Vagina (tissue), 2 donors: ENCODE measurements at regions of chr4 and their contacts with region 1.

Region 1: DNA sequence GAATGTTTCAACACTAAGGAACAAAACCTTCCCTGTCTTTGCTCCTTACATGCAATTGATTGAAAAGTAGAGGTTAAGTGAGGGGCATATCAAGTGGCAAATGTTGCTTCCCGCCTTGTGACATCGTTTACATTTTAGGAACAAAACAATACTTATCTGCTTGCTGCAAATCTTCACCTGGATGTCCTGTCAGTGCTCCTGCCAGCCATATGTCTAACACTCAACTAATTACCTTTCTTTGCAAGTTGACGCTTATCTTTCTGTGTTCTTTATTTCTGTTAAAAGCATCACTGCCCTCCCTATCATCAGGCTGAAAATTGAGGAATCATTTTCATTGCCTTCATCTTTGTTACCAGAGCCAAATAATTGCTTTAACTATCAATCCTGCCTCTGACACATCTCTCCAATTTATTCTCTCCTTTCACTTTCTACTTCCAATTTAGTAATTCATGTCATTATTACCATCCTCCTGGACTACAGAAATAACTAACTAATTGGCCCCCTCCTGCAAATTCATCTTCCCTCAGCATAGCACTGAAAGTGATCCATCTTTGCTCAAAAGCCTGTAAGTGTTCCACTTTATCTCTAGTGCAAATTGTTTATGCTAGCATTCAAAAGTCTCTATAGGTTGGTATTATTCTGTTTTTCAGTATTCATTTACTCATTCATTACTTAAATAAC is 298.7 kb upstream of the ATOH1 start:
- DNase-seq: no peak
- H3K4me3 ChIP-seq: no peak overlapping the region
- H3K27ac ChIP-seq: no peak overlapping the region
- H3K4me1 ChIP-seq: no peaks in the 10 kb centered on the region
- H3K27me3 ChIP-seq: no peaks in the 10 kb centered on the region
- CTCF ChIP-seq: no peak
- POLR2A ChIP-seq: no peak

Region 2: DNA sequence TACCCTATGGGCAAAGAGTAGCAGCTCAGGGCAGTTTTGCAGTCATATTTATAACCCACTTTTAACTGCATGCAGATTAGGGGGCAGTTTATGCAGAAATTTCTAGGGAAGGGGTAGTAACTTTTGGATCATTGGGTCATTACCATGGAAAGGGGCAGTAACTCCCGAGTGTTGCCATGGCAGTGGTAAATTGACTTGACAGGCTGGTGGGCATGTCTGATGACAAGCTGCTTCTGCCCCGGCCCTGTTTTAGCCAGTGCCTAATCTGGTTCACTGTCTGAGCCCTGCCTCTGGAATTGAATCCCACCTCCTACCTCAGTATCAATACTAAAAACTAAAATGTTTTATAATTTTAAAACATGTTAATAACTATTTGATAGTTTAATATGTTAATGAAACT is 63.4 kb before region 1 on chr4:
- intact Hi-C with region 1: no loop called
- DNase-seq: no peak
- H3K4me3 ChIP-seq: no peak overlapping the region
- H3K27ac ChIP-seq: no peak overlapping the region
- H3K4me1 ChIP-seq: no peaks in the 10 kb centered on the region
- H3K27me3 ChIP-seq: no peaks in the 10 kb centered on the region
- CTCF ChIP-seq: no peak
- POLR2A ChIP-seq: no peak

Region 3: GRCh38 chr4:93540562-93540961 is 10.7 kb after region 1 on chr4:
- intact Hi-C with region 1: loop called (anchors 2 kb)
- DNase-seq: no peak
- H3K4me3 ChIP-seq: no peak overlapping the region
- H3K27ac ChIP-seq: no peak overlapping the region
- H3K4me1 ChIP-seq: no peaks in the 10 kb centered on the region
- H3K27me3 ChIP-seq: no peaks in the 10 kb centered on the region
- CTCF ChIP-seq: no peak
- POLR2A ChIP-seq: no peak